ENCODE measurements at regions of chr14 and their contacts with region 1.

Region 1: GRCh38 chr14:91373591-91374254 is 43.9 kb downstream of the CCDC88C start:
- DNase-seq: peak; percentile 50
- H3K4me3 Mint-ChIP-seq: peak overlapping the region; percentile 75
- H3K27ac Mint-ChIP-seq: peak overlapping the region; percentile 94
- H3K4me1 Mint-ChIP-seq: peaks cover 91% of the 10 kb centered on the region
- H3K27me3 Mint-ChIP-seq: no peaks in the 10 kb centered on the region

Region 2: GRCh38 chr14:91303091-91303923 is 70.4 kb before region 1 on chr14:
- intact Hi-C with region 1: loop called (anchors 1 kb)
- DNase-seq: peak; percentile 36
- H3K4me3 Mint-ChIP-seq: peak overlapping the region; percentile 63
- H3K27ac Mint-ChIP-seq: peak overlapping the region; percentile 98
- H3K4me1 Mint-ChIP-seq: peaks cover 72% of the 10 kb centered on the region
- H3K27me3 Mint-ChIP-seq: no peaks in the 10 kb centered on the region

Region 3: GRCh38 chr14:91388551-91388975 is 14.8 kb after region 1 on chr14:
- intact Hi-C with region 1: loop called (anchors 1 kb)
- DNase-seq: peak; percentile 42
- H3K4me3 Mint-ChIP-seq: peak overlapping the region; percentile 49
- H3K27ac Mint-ChIP-seq: peak overlapping the region; percentile 58
- H3K4me1 Mint-ChIP-seq: peaks cover 69% of the 10 kb centered on the region
- H3K27me3 Mint-ChIP-seq: no peaks in the 10 kb centered on the region

Region 4: GRCh38 chr14:91405241-91405721 is 31.6 kb after region 1 on chr14:
- intact Hi-C with region 1: loop called (anchors 1 kb)
- DNase-seq: peak; percentile 41
- H3K4me3 Mint-ChIP-seq: peak overlapping the region; percentile 63
- H3K27ac Mint-ChIP-seq: peak overlapping the region; percentile 82
- H3K4me1 Mint-ChIP-seq: peaks cover 86% of the 10 kb centered on the region
- H3K27me3 Mint-ChIP-seq: no peaks in the 10 kb centered on the region

Region 5: DNA sequence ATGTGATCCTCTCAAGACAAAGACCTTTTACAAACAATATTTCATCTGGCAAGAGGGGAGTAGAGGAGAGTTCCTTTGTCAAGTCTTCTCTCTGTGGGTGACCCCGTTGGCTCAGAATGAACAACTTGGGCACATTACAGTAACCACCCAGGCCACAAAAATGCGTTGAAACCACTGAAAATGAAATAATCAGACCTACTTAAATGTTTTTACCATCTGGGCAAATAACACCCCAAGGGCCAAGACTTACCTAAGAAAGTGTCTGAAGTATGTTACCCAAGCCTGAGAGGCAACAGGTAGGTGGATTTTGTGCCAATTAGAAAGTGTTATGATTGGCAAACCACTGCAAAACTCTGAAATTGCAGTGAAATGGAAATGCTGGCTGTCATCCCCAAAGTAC is 492.3 kb after region 1 on chr14:
- intact Hi-C with region 1: loop called (anchors 10 kb)
- DNase-seq: no peak
- H3K4me3 Mint-ChIP-seq: peak overlapping the region; percentile 95
- H3K27ac Mint-ChIP-seq: peak overlapping the region; percentile 97
- H3K4me1 Mint-ChIP-seq: peaks cover 89% of the 10 kb centered on the region
- H3K27me3 Mint-ChIP-seq: no peaks in the 10 kb centered on the region

Measured in activated T-helper 1 cell treated with anti-CD3 and anti-CD28 coated beads, Interleukin-12 subunit alpha, Interleukin-12 subunit beta, Interleukin-2, Interleukin-4 antibody, amounts not matched to agents 30 ng/mL and 10 ng/mL and 1 ng/mL, durations not matched to agents 14 hours and 24 hours and 36 hours (primary cell).